Dorsolateral prefrontal cortex (tissue), 120 donors: ENCODE measurements at regions of chr15 and their contacts with region 1.

Region 1: GRCh38 chr15:85831415-85832113 is 36.8 kb upstream of the KLHL25 start:
- DNase-seq: peak; percentile 38 to 76 (median 61)
- H3K4me3 ChIP-seq: no peak overlapping the region
- H3K27ac ChIP-seq: peak overlapping the region in 2 of 59 donors; percentile 4 to 31
- H3K27me3 ChIP-seq: no peaks in the 10 kb centered on the region
- CTCF ChIP-seq: peak in 55 of 56 donors; percentile 38 to 87 (median 68)

Region 2: DNA sequence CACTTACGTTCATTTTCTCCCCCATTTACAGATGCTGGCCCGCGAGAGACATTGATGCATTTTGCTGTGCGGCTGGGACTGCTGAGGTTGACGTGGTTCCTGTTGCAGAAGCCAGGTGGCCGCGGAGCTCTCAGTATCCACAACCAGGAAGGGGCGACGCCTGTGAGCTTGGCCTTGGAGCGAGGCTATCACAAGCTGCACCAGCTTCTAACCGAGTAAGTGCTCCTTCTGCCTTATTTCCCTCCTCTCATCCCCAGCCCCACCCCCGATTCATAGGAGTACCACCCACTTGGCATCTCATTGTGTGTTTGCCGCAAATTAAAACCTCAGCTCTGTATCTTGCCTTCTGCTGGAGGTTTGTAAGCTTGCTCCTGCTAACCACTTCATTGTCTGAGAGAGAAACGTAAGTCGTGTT is 287.8 kb before region 1 on chr15:
- intact Hi-C with region 1: no loop called
- DNase-seq: peak in 3 of 10 donors; percentile 13 to 41 (median 20)
- H3K4me3 ChIP-seq: peak overlapping the region in 10 of 59 donors; percentile 2 to 32 (median 14)
- H3K27ac ChIP-seq: peak overlapping the region in 6 of 59 donors; percentile 6 to 39 (median 36)
- H3K27me3 ChIP-seq: peaks cover 0 to 4% (median 0%) of the 10 kb centered on the region in 45 donors
- CTCF ChIP-seq: no peak

Region 3: DNA sequence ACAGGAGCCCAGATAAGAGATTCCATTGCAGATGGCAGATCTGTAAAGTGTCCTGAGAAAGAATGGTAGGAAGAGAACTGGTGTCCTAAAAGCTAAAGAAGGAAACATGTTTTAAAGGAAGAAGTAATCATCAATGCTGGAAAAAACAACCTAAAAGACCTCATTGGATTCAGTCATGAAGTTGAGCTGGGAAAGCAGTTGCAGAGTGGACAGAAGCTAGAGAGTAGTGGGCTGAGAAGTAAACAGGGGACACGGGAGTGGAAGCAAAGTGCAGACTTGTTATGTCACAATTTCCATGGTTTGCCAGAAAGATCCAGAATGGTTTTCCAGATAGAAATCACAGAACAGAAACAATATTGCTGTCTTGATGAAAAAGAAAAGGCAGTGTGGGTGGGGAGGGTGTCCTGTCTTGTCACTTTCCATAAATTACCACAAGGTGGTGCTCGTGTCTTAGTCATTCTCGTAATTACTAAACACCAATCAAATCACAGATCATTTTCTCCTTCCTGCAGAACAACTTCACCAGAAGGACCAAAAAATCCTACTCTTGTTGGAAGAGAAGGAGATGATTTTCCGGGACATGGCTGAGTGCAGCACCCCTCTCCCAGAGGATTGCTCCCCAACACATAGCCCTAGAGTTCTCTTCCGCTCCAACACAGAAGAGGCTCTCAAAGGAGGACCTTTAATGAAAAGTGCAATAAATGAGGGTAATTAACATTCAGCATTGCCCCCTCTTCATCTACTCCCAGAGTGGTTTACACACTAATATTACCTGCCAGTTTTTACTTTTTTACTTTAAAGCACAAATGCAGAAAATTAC is 101.4 kb before region 1 on chr15:
- intact Hi-C with region 1: loop called (anchors 2 to 5 kb)
- DNase-seq: peak in 2 of 10 donors; percentile 51 to 65
- H3K4me3 ChIP-seq: no peak overlapping the region
- H3K27ac ChIP-seq: peak overlapping the region in 3 of 59 donors; percentile 14 to 31 (median 27)
- H3K27me3 ChIP-seq: no peaks in the 10 kb centered on the region
- CTCF ChIP-seq: peak; percentile 70 to 95 (median 88)

Region 4: DNA sequence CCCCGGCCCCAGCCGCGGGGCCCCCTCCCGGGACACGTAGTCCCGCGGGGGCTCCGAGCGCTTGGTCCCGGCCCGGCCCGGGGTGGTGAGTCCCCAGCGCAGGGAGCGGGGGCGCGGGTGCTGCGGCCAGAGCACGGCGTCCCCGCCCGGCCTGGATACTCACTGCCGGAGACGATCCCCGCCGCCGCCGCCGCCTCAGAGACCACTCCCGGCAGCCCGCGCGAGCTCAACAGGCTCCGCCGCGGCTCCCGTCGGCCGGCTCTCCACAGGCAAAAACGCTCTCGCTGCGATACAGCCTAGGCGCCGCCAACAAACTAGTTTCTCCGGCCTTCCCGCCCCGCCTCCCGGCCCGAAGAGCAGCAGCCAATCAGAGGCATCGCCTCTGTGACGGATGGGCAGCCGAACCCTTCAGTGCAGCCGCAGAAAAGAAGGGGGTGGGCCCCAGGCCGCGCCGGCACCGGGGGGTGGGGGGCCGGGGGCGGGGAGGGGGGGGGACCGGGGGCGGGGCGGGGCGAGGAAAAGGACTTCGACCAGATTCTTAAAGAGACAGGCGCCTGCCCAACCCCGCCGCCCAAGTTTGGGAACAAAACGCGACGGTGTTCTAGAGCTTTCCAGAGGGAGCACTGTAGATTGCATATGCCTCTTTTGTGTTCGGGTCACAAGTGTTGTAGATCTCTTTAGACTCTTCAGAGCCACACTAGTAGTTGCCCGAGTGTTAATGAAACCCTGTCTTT is 36.8 kb before region 1 on chr15 and contains the start of gene KLHL25:
- intact Hi-C with region 1: loop called in 1 of 2 experiments (anchors 5 kb)
- DNase-seq: peak; percentile 86 to 97 (median 94)
- H3K4me3 ChIP-seq: peak within 1 kb of the TSS; percentile 63 to 98 (median 89)
- H3K27ac ChIP-seq: peak within 1 kb of the TSS in 57 of 59 donors; percentile 5 to 95 (median 84)
- H3K27me3 ChIP-seq: no peaks in the 10 kb centered on the region
- CTCF ChIP-seq: peak in 19 of 56 donors; percentile 6 to 34 (median 15)
- total RNA-seq, gene KLHL25: 6.4 to 24.6 (median 10.7) TPM